Calu3 (cell line): ENCODE measurements at regions of chr3 and their contacts with region 1.

Region 1: DNA sequence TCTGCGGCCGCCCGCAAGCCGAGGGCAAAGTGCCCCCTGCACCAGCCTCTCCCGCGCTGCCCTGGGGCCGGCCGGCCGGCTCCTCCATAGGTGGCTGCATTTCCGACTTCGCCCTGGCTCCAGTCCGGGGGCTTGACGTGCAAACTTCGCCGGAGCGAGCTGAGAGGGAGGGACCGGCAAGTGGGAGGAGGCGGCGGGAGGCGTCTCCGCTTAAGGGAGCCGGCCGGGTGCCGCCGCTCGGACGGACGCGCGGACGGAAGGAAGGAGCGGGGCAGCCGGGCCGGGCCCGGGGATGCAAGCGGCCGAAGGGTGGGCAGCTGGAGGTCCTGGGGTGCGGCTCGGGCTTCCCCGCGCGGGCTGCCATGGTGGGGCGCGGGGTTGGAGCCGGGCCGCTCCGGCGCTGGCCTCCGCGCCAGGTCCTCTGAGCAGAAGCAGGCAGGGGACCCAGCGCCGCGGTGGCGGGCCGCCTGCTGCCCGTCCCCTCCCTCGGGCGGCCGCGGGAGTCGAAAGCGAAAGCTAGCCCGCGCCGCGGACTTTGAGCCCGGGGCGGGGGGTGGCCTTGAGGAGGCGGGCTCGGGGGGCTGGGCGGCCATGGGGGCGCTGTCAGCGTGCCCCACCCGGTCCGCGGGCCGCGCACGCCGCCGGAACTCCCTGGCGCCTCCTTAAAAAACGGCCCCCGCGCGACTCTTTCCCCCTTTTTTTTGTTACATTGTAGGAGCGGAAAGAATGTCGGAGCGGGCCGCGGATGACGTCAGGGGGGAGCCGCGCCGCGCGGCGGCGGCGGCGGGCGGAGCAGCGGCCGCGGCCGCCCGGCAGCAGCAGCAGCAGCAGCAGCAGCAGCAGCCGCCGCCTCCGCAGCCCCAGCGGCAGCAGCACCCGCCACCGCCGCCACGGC is at the start of gene SCAANT1:
- DNase-seq: peak; percentile 93
- H3K4me3 Mint-ChIP-seq: peak within 1 kb of the TSS; percentile 88
- H3K27ac Mint-ChIP-seq: peak within 1 kb of the TSS; percentile 77
- H3K4me1 Mint-ChIP-seq: peaks cover 25% of the 10 kb centered on the region
- H3K27me3 Mint-ChIP-seq: no peaks in the 10 kb centered on the region
- CTCF ChIP-seq: no peak
- total RNA-seq, gene SCAANT1: not detected in 2 replicates

Region 2: GRCh38 chr3:63863148-63864007 is 48.7 kb before region 1 on chr3 and contains the starts of genes ATXN7 and THOC7:
- CTCF ChIA-PET with region 1: interaction called, 3 read pairs
- intact Hi-C with region 1: loop called (anchors 5 kb)
- DNase-seq: peak; percentile 73
- H3K4me3 Mint-ChIP-seq: peak within 1 kb of the TSS; percentile 78
- H3K27ac Mint-ChIP-seq: peak within 1 kb of the TSS; percentile 76
- H3K4me1 Mint-ChIP-seq: peaks cover 42% of the 10 kb centered on the region
- H3K27me3 Mint-ChIP-seq: no peaks in the 10 kb centered on the region
- CTCF ChIP-seq: no peak
- total RNA-seq, gene ATXN7: 31.2 and 38.3 TPM in 2 replicates
- total RNA-seq, gene THOC7: 70.7 and 77.7 TPM in 2 replicates

Region 3: GRCh38 chr3:63933459-63933858 is 21.3 kb after region 1 on chr3:
- CTCF ChIA-PET with region 1: no interaction called
- intact Hi-C with region 1: no loop called
- DNase-seq: no peak
- H3K4me3 Mint-ChIP-seq: no peak overlapping the region
- H3K27ac Mint-ChIP-seq: no peak overlapping the region
- H3K4me1 Mint-ChIP-seq: peaks cover 42% of the 10 kb centered on the region
- H3K27me3 Mint-ChIP-seq: no peaks in the 10 kb centered on the region
- CTCF ChIP-seq: no peak

Region 4: GRCh38 chr3:63951492-63952247 is 39.5 kb after region 1 on chr3:
- CTCF ChIA-PET with region 1: no interaction called
- intact Hi-C with region 1: no loop called
- DNase-seq: no peak
- H3K4me3 Mint-ChIP-seq: no peak overlapping the region
- H3K27ac Mint-ChIP-seq: no peak overlapping the region
- H3K4me1 Mint-ChIP-seq: peaks cover 24% of the 10 kb centered on the region
- H3K27me3 Mint-ChIP-seq: no peaks in the 10 kb centered on the region
- CTCF ChIP-seq: no peak

Region 5: GRCh38 chr3:63961891-63962290 is 49.8 kb after region 1 on chr3:
- CTCF ChIA-PET with region 1: no interaction called
- intact Hi-C with region 1: loop called (anchors 5 kb)
- DNase-seq: no peak
- H3K4me3 Mint-ChIP-seq: no peak overlapping the region
- H3K27ac Mint-ChIP-seq: no peak overlapping the region
- H3K4me1 Mint-ChIP-seq: peaks cover 13% of the 10 kb centered on the region
- H3K27me3 Mint-ChIP-seq: no peaks in the 10 kb centered on the region
- CTCF ChIP-seq: no peak

Region 6: GRCh38 chr3:63993653-63994079 is 81.5 kb after region 1 on chr3:
- CTCF ChIA-PET with region 1: interaction called, 3 read pairs
- intact Hi-C with region 1: loop called (anchors 5 kb)
- DNase-seq: peak; percentile 56
- H3K4me3 Mint-ChIP-seq: no peak overlapping the region
- H3K27ac Mint-ChIP-seq: no peak overlapping the region
- H3K4me1 Mint-ChIP-seq: no peaks in the 10 kb centered on the region
- H3K27me3 Mint-ChIP-seq: no peaks in the 10 kb centered on the region
- CTCF ChIP-seq: peak; percentile 64